Activated CD8-positive, alpha-beta memory T cell treated with anti-CD3 and anti-CD28 coated beads, Interleukin-2, amount 10 ng/mL, durations not matched to agents 7 days and 5 days (primary cell): ENCODE measurements at regions of chr12 and their contacts with region 1.

Region 1: GRCh38 chr12:130826149-130826801 is 12.8 kb downstream of the STX2 start:
- DNase-seq: peak; percentile 76
- ATAC-seq: peak; percentile 94
- H3K4me3 Mint-ChIP-seq: no peak overlapping the region
- H3K27ac Mint-ChIP-seq: no peak overlapping the region
- H3K4me1 Mint-ChIP-seq: peaks cover 23% of the 10 kb centered on the region
- H3K27me3 Mint-ChIP-seq: no peaks in the 10 kb centered on the region

Region 2: GRCh38 chr12:130526813-130527212 is 299.5 kb before region 1 on chr12:
- CTCF ChIA-PET with region 1: no interaction called
- DNase-seq: no peak
- ATAC-seq: no peak
- H3K4me3 Mint-ChIP-seq: no peak overlapping the region
- H3K27ac Mint-ChIP-seq: no peak overlapping the region
- H3K4me1 Mint-ChIP-seq: no peaks in the 10 kb centered on the region
- H3K27me3 Mint-ChIP-seq: no peaks in the 10 kb centered on the region

Region 3: GRCh38 chr12:130838951-130839769 is 12.9 kb after region 1 on chr12 and contains the start of gene STX2:
- CTCF ChIA-PET with region 1: interaction called, 36 read pairs
- DNase-seq: peak; percentile 87
- ATAC-seq: peak; percentile 92
- H3K4me3 Mint-ChIP-seq: peak within 1 kb of the TSS; percentile 73
- H3K27ac Mint-ChIP-seq: peak within 1 kb of the TSS; percentile 67
- H3K4me1 Mint-ChIP-seq: peaks cover 28% of the 10 kb centered on the region
- H3K27me3 Mint-ChIP-seq: no peaks in the 10 kb centered on the region
- total RNA-seq, gene STX2: 17.2 to 17.8 TPM

Region 4: DNA sequence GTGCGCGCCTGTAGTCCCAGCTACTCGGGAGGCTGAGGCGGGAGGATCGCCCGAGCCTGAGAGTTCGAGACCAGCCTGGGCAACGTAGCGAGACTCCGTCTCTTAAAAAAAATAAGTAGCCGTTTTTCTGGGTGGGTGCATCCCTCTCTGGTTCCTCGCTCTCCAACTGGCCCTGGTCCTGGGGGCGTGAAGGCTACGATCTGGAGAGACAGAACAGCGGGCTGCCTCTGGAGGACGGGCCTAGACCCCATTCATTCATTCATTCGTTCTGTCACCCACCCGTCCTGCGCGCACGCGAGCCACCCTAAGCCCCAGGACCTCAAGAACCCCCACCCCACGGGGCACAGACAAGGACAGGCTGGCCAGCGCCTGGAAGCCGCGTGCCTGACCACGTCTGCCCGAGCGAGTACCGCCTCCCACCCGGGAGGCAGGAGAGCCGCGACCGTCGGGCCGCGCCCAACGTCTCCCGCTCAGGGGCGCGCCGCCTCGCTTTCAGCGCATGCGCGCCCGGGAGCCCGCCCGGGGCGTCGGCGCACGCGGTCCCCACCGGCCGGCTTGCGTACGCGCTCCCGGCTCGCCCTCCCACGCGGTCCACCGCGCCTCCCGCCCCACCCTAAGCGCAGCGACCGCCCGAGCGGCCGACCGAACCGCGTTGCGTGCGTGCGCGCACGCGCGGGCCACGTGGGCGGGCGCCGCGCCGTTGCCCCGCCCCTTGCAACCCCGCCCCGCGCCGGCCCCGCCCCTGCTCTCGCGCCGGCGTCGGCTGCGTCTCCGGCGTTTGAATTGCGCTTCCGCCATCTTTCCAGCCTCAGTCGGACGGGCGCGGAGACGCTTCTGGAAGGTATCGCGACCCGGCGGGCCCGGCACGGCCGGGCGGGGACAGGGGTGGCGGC is 45.3 kb after region 1 on chr12 and contains the start of gene RAN:
- CTCF ChIA-PET with region 1: interaction called, 10 read pairs
- DNase-seq: peak; percentile 92
- ATAC-seq: peak; percentile 76
- H3K4me3 Mint-ChIP-seq: peak within 1 kb of the TSS; percentile 95
- H3K27ac Mint-ChIP-seq: peak within 1 kb of the TSS; percentile 97
- H3K4me1 Mint-ChIP-seq: peaks cover 49% of the 10 kb centered on the region
- H3K27me3 Mint-ChIP-seq: no peaks in the 10 kb centered on the region
- total RNA-seq, gene RAN: 1,047 to 1,473 TPM

Region 5: DNA sequence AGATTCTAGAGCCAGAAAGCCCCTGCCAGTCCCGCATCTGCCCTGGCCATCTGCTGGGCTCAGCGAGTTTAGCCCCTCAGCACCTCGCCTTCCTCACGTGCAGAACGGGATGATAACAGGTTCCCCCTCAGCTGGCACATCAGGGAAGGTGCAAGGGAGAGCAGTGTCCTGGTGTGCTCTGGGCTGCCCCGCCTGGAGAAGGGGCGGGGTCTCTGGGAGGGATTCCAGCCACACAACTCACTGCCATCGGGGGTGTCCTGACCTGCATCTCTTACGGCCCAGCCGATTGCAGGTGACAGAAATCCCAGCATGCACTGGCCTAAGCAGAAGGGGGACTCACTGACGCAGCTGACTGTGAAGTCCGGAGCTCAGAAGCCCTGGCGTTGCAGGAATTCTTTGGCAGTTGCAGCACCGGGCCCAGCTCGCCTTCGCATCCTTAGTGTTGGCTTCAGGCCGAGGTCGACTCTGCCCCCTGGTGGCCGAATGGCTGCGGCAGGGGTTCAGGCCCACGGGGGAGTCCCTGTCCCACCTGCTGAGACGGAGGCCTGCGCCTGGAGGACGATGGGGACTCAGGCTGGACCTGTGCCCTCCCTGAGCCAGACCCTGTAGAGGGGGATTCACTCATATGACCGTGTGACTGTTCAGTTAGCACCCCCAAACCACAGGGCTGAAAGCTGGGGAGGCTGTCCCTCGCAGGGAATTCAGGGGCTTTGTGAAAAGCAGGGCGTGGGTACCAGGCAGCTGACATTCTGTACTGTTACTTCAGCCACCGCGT is 306.0 kb after region 1 on chr12:
- CTCF ChIA-PET with region 1: interaction called, 14 read pairs
- DNase-seq: peak; percentile 73
- ATAC-seq: peak; percentile 65
- H3K4me3 Mint-ChIP-seq: no peak overlapping the region
- H3K27ac Mint-ChIP-seq: no peak overlapping the region
- H3K4me1 Mint-ChIP-seq: no peaks in the 10 kb centered on the region
- H3K27me3 Mint-ChIP-seq: no peaks in the 10 kb centered on the region